T-cell (primary cell): ENCODE measurements at regions of chr19 and their contacts with region 1.

Region 1: GRCh38 chr19:29896802-29897201 is 45.2 kb upstream of the URI1 start:
- DNase-seq: no peak
- ATAC-seq: no peak
- H3K4me3 ChIP-seq: no peak overlapping the region
- H3K4me3 Mint-ChIP-seq: no peak overlapping the region
- H3K27ac ChIP-seq: no peak overlapping the region
- H3K27ac Mint-ChIP-seq: no peak overlapping the region
- H3K4me1 ChIP-seq: no peaks in the 10 kb centered on the region
- H3K4me1 Mint-ChIP-seq: no peaks in the 10 kb centered on the region
- H3K27me3 ChIP-seq: peaks cover 0 to 6% of the 10 kb centered on the region in 2 experiments
- H3K27me3 Mint-ChIP-seq: peaks cover 1 to 6% of the 10 kb centered on the region in 2 donors

Region 2: DNA sequence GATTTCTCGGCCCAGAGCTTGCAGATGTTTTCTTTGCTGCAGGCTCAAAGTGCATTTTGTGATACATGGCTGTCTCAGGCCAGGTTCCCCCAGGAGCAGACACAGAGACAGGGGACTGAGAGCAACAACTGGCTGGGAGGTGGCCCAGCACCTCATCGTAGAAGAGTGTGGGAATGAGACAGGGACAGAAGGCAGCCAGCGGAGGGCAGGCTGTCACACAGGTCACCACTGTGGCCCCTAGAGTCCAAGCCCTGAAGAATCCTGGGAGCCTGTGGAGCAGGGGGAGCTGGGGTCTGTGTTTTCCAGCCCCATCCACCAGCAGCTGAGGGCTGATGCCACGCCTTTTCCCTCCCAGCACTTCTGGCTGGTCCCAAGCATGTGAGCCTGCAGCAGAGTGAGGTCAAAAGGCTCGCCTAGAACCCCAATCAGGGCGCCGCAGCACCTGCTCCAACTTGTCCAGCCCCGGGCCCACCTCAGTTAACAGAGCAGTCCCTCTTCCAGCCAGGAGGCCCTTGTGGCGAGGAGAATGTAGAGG is 1407.6 kb before region 1 on chr19:
- CTCF ChIA-PET with region 1: interaction called in 1 of 2 experiments, 12 read pairs
- POLR2A ChIA-PET with region 1: no interaction called
- DNase-seq: no peak
- ATAC-seq: peak in 1 of 4 experiments; percentile 17
- H3K4me3 ChIP-seq: no peak overlapping the region
- H3K4me3 Mint-ChIP-seq: no peak overlapping the region
- H3K27ac ChIP-seq: no peak overlapping the region
- H3K27ac Mint-ChIP-seq: no peak overlapping the region
- H3K4me1 ChIP-seq: no peaks in the 10 kb centered on the region
- H3K4me1 Mint-ChIP-seq: peaks cover 0 to 5% (median 4%) of the 10 kb centered on the region in 3 donors
- H3K27me3 ChIP-seq: peaks cover 0 to 7% of the 10 kb centered on the region in 2 experiments
- H3K27me3 Mint-ChIP-seq: no peaks in the 10 kb centered on the region

Region 3: GRCh38 chr19:29908963-29909944 is 12.5 kb after region 1 on chr19:
- CTCF ChIA-PET with region 1: no interaction called
- POLR2A ChIA-PET with region 1: no interaction called
- DNase-seq: no peak
- ATAC-seq: no peak
- H3K4me3 ChIP-seq: no peak overlapping the region
- H3K4me3 Mint-ChIP-seq: no peak overlapping the region
- H3K27ac ChIP-seq: no peak overlapping the region
- H3K27ac Mint-ChIP-seq: no peak overlapping the region
- H3K4me1 ChIP-seq: no peaks in the 10 kb centered on the region
- H3K4me1 Mint-ChIP-seq: no peaks in the 10 kb centered on the region
- H3K27me3 ChIP-seq: peaks cover 0 to 16% of the 10 kb centered on the region in 2 experiments
- H3K27me3 Mint-ChIP-seq: peaks cover 7 to 9% of the 10 kb centered on the region in 2 donors